ENCODE measurements at regions of chr17 and their contacts with region 1.

Region 1: GRCh38 chr17:80832888-80833583 is 158.6 kb upstream of the CHMP6 start:
- DNase-seq: peak; percentile 99
- H3K4me3 ChIP-seq: peak overlapping the region in 2 of 3 experiments; percentile 28 to 47
- H3K27ac ChIP-seq: peak overlapping the region; percentile 96
- H3K4me1 ChIP-seq: peaks cover 12% of the 10 kb centered on the region
- H3K27me3 ChIP-seq: no peaks in the 10 kb centered on the region
- CTCF ChIP-seq: no peak
- POLR2A ChIP-seq: peak; percentile 91

Region 2: GRCh38 chr17:80544655-80545498 is 288.2 kb before region 1 on chr17 and contains the start of gene RPTOR:
- CTCF ChIA-PET with region 1: no interaction called
- POLR2A ChIA-PET with region 1: no interaction called
- dilution Hi-C with region 1: no loop called
- intact Hi-C with region 1: loop called (anchors 10 kb)
- DNase-seq: peak; percentile 95
- H3K4me3 ChIP-seq: peak within 1 kb of the TSS; percentile 72 to 86 (median 78)
- H3K27ac ChIP-seq: peak within 1 kb of the TSS; percentile 76
- H3K4me1 ChIP-seq: peaks cover 12% of the 10 kb centered on the region
- H3K27me3 ChIP-seq: no peaks in the 10 kb centered on the region
- CTCF ChIP-seq: no peak
- POLR2A ChIP-seq: peak; percentile 63
- total RNA-seq, gene RPTOR: 37.0 and 41.8 TPM in 2 replicates

Region 3: DNA sequence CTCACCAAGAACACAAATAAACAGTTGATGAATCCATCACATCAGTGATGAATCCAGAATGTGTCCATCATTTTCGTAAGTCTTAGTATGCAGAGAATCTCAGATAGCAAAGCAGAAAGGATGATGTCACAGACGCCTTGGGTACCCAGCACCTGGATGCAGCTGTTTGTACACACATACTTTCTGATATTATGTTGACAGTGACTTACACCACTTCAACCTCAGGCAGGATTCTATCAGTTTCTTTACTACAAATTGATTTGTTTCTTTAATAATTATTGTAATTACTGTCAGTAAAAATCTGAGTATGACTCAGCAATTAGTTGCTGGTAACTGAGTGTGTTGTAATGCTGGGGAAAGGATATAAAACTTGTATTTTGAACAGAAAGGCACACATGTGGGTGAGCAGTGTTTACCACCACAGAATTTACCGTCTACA is 128.6 kb before region 1 on chr17:
- CTCF ChIA-PET with region 1: no interaction called
- POLR2A ChIA-PET with region 1: no interaction called
- dilution Hi-C with region 1: no loop called
- intact Hi-C with region 1: no loop called
- DNase-seq: no peak
- H3K4me3 ChIP-seq: no peak overlapping the region
- H3K27ac ChIP-seq: no peak overlapping the region
- H3K4me1 ChIP-seq: no peaks in the 10 kb centered on the region
- H3K27me3 ChIP-seq: no peaks in the 10 kb centered on the region
- CTCF ChIP-seq: no peak
- POLR2A ChIP-seq: no peak

Region 4: GRCh38 chr17:80761110-80761871 is 71.7 kb before region 1 on chr17:
- CTCF ChIA-PET with region 1: interaction called, 6 read pairs
- POLR2A ChIA-PET with region 1: no interaction called
- dilution Hi-C with region 1: no loop called
- intact Hi-C with region 1: loop called (anchors 1 kb)
- DNase-seq: peak; percentile 87
- H3K4me3 ChIP-seq: peak overlapping the region in 1 of 3 experiments; percentile 7
- H3K27ac ChIP-seq: peak overlapping the region; percentile 78
- H3K4me1 ChIP-seq: peaks cover 59% of the 10 kb centered on the region
- H3K27me3 ChIP-seq: no peaks in the 10 kb centered on the region
- CTCF ChIP-seq: no peak
- POLR2A ChIP-seq: peak; percentile 49

Region 5: DNA sequence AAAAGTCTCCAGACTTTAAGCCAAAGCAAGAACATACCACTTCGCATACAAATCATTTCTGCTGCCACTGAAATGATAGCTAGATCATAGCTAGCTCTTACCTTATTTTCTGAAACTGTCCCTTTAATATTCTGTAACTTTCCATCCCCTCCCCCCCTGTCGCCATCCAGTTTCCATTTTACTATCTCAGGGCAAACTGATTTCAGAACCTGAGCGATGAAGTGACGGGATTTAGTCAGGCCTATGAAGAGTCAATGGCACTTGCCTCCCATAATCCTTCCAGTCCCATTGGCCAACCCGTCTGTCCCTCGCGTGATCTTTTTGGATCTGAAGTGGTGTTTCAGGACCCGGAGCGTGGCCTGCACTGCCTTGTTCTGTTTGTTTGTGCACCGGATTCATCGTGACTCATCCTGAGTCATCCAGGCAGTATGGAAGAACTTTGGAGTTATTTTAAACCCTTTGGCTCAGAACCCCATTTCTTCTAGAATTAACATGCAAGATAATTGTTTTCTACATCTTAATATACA is 41.2 kb before region 1 on chr17:
- CTCF ChIA-PET with region 1: interaction called, 7 read pairs
- POLR2A ChIA-PET with region 1: no interaction called
- dilution Hi-C with region 1: no loop called
- intact Hi-C with region 1: loop called (anchors 1 kb)
- DNase-seq: peak; percentile 98
- H3K4me3 ChIP-seq: no peak overlapping the region
- H3K27ac ChIP-seq: peak overlapping the region; percentile 99
- H3K4me1 ChIP-seq: peaks cover 61% of the 10 kb centered on the region
- H3K27me3 ChIP-seq: no peaks in the 10 kb centered on the region
- CTCF ChIP-seq: no peak
- POLR2A ChIP-seq: no peak

Region 6: GRCh38 chr17:80855948-80856862 is 23.2 kb after region 1 on chr17:
- CTCF ChIA-PET with region 1: interaction called, 6 read pairs
- POLR2A ChIA-PET with region 1: interaction called, 4 read pairs
- dilution Hi-C with region 1: no loop called
- intact Hi-C with region 1: loop called (anchors 1 kb)
- DNase-seq: peak; percentile 95
- H3K4me3 ChIP-seq: no peak overlapping the region
- H3K27ac ChIP-seq: peak overlapping the region; percentile 97
- H3K4me1 ChIP-seq: peaks cover 26% of the 10 kb centered on the region
- H3K27me3 ChIP-seq: no peaks in the 10 kb centered on the region
- CTCF ChIP-seq: no peak
- POLR2A ChIP-seq: no peak

Region 7: DNA sequence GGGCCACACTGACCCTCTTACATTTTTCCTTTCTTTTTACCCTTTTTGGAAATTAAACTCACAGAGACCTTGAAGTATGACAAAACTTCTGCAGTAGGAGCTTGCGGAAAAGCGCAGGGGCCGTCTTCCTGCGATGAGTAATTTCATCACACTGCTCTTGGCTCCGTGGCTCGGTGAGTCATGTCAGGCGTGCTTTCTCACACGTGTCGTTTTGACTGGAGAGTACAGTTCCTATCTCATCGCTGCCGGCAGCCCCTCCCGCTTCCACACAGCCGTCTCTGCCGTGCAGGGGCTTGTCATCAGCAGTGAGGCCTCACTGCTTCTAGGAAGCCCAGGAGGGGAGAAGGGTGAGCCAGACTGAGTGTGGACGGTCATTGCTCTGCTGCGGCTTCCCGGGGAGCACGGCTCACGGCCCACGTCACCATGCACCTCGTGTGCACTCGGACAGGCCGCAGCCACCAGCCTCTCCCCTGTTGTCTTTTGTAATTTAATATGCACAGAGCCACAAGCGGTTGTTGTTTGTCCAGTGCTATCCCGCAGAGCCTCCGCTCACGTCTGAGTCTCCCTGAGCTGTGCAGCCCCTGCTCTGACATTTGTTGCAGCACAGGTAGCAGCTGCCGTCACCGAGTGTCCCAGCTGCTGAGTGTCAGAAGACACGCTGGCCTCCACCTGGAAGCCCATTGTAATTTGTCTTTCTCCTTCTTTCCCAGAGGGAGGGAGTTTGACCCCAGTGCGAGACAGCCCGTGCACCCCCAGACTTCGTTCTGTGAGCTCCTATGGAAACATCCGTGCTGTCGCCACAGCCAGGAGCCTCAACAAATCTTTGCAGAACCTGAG is 59.2 kb after region 1 on chr17:
- CTCF ChIA-PET with region 1: interaction called, 8 read pairs
- POLR2A ChIA-PET with region 1: no interaction called
- dilution Hi-C with region 1: no loop called
- intact Hi-C with region 1: loop called (anchors 1 kb)
- DNase-seq: peak; percentile 91
- H3K4me3 ChIP-seq: no peak overlapping the region
- H3K27ac ChIP-seq: peak overlapping the region; percentile 79
- H3K4me1 ChIP-seq: peaks cover 28% of the 10 kb centered on the region
- H3K27me3 ChIP-seq: no peaks in the 10 kb centered on the region
- CTCF ChIP-seq: no peak
- POLR2A ChIP-seq: no peak

Region 8: DNA sequence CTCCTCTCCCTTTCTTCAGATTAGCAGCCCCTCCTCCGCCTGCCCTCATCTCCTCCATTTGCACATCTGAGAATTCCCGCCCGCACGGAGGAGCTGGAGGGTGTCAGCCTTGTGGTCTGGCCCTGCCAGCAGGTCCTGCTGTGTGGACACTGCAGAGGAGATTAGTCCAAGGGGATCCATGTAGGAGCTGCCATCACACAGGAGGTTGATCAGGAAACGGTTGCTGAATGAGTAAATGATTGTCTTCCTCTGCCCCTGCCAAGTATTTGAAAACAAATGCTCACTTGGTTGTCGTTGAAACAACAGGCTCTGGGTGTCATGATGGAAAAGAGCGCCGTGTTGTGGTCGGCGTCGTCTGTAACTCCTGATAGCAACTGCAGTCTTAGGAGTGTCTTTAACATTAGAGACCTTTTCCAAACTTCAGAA is 94.8 kb after region 1 on chr17:
- CTCF ChIA-PET with region 1: interaction called, 6 read pairs
- POLR2A ChIA-PET with region 1: no interaction called
- dilution Hi-C with region 1: no loop called
- intact Hi-C with region 1: loop called (anchors 1 kb)
- DNase-seq: peak; percentile 96
- H3K4me3 ChIP-seq: no peak overlapping the region
- H3K27ac ChIP-seq: peak overlapping the region; percentile 54
- H3K4me1 ChIP-seq: peaks cover 18% of the 10 kb centered on the region
- H3K27me3 ChIP-seq: no peaks in the 10 kb centered on the region
- CTCF ChIP-seq: peak; percentile 80 to 84
- POLR2A ChIP-seq: no peak